ENCODE measurements at regions of chr4 and their contacts with region 1.

Region 1: GRCh38 chr4:61866378-61867030 is 666.4 kb downstream of the ADGRL3 start:
- DNase-seq: no peak
- ATAC-seq: no peak
- H3K4me3 ChIP-seq: no peak overlapping the region
- H3K27ac ChIP-seq: no peak overlapping the region
- H3K4me1 ChIP-seq: no peaks in the 10 kb centered on the region
- H3K27me3 ChIP-seq: no peaks in the 10 kb centered on the region
- CTCF ChIP-seq: no peak
- EP300 ChIP-seq: no peak
- POLR2A ChIP-seq: no peak
- RAD21 ChIP-seq: no peak

Region 2: GRCh38 chr4:60847614-60848013 is 1018.9 kb before region 1 on chr4:
- CTCF ChIA-PET with region 1: no interaction called
- POLR2A ChIA-PET with region 1: no interaction called
- RAD21 ChIA-PET with region 1: no interaction called
- SMC1A ChIA-PET with region 1: no interaction called
- in situ Hi-C with region 1: no loop called
- intact Hi-C with region 1: no loop called
- DNase-seq: no peak
- ATAC-seq: no peak
- H3K4me3 ChIP-seq: no peak overlapping the region
- H3K27ac ChIP-seq: no peak overlapping the region
- H3K4me1 ChIP-seq: no peaks in the 10 kb centered on the region
- H3K27me3 ChIP-seq: no peaks in the 10 kb centered on the region
- CTCF ChIP-seq: no peak
- EP300 ChIP-seq: no peak
- POLR2A ChIP-seq: no peak
- RAD21 ChIP-seq: no peak

Region 3: GRCh38 chr4:61853041-61853440 is 13.5 kb before region 1 on chr4:
- CTCF ChIA-PET with region 1: interaction called, 7 read pairs
- POLR2A ChIA-PET with region 1: no interaction called
- RAD21 ChIA-PET with region 1: interaction called, 8 read pairs
- SMC1A ChIA-PET with region 1: interaction called, 29 read pairs
- in situ Hi-C with region 1: no loop called
- intact Hi-C with region 1: no loop called
- DNase-seq: no peak
- ATAC-seq: no peak
- H3K4me3 ChIP-seq: no peak overlapping the region
- H3K27ac ChIP-seq: no peak overlapping the region
- H3K4me1 ChIP-seq: no peaks in the 10 kb centered on the region
- H3K27me3 ChIP-seq: no peaks in the 10 kb centered on the region
- CTCF ChIP-seq: no peak
- EP300 ChIP-seq: no peak
- POLR2A ChIP-seq: no peak
- RAD21 ChIP-seq: no peak

Region 4: GRCh38 chr4:61877893-61878292 is 11.4 kb after region 1 on chr4:
- CTCF ChIA-PET with region 1: interaction called, 8 read pairs
- POLR2A ChIA-PET with region 1: interaction called, 7 read pairs
- RAD21 ChIA-PET with region 1: interaction called, 5 read pairs
- SMC1A ChIA-PET with region 1: interaction called, 14 read pairs
- in situ Hi-C with region 1: no loop called
- intact Hi-C with region 1: no loop called
- DNase-seq: no peak
- ATAC-seq: no peak
- H3K4me3 ChIP-seq: no peak overlapping the region
- H3K27ac ChIP-seq: no peak overlapping the region
- H3K4me1 ChIP-seq: no peaks in the 10 kb centered on the region
- H3K27me3 ChIP-seq: no peaks in the 10 kb centered on the region
- CTCF ChIP-seq: no peak
- EP300 ChIP-seq: no peak
- POLR2A ChIP-seq: no peak
- RAD21 ChIP-seq: no peak

Region 5: DNA sequence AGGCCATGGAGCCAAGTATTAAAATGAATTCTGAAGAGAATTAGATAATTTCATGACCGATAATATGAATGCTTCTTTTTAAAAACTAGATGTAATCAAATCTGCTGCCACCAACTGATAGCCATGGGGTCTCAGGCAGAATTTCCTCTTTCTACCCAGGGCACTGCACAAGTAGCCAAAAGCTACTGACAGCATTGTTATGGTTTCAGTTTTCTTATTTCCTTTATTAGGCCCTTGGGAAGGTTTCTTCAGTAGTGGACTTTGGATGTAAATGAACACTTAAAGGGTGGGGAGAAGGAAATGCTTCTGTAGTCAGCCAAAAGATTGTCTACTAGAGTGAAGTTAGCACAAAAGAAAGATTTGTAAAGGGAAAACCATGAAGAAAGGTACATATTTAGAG is 19.6 kb after region 1 on chr4:
- CTCF ChIA-PET with region 1: interaction called, 7 read pairs
- POLR2A ChIA-PET with region 1: no interaction called
- RAD21 ChIA-PET with region 1: interaction called, 4 read pairs
- SMC1A ChIA-PET with region 1: interaction called, 12 read pairs
- in situ Hi-C with region 1: no loop called
- intact Hi-C with region 1: no loop called
- DNase-seq: no peak
- ATAC-seq: no peak
- H3K4me3 ChIP-seq: no peak overlapping the region
- H3K27ac ChIP-seq: no peak overlapping the region
- H3K4me1 ChIP-seq: no peaks in the 10 kb centered on the region
- H3K27me3 ChIP-seq: no peaks in the 10 kb centered on the region
- CTCF ChIP-seq: no peak
- EP300 ChIP-seq: no peak
- POLR2A ChIP-seq: no peak
- RAD21 ChIP-seq: no peak

Region 6: DNA sequence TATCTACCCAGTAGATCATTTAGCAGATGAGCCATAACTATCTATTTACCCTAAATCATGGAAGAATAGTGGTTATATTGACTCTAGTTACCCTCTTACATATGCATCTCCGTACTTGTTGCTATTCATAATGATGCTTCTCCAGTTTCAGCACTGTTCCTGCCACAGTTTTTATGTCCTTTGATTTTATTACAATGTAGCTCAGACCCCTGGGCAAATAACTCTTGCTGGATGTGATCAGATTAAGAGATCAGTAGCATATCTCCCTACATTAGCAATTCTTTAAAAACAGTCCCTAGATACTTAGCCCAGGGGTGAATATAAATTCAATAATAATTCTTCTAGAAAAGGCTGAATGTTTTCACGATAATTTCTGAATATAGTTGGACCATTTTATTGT is 30.1 kb after region 1 on chr4:
- CTCF ChIA-PET with region 1: interaction called, 7 read pairs
- POLR2A ChIA-PET with region 1: interaction called, 6 read pairs
- RAD21 ChIA-PET with region 1: interaction called, 5 read pairs
- SMC1A ChIA-PET with region 1: interaction called, 13 read pairs
- in situ Hi-C with region 1: no loop called
- intact Hi-C with region 1: no loop called
- DNase-seq: no peak
- ATAC-seq: no peak
- H3K4me3 ChIP-seq: no peak overlapping the region
- H3K27ac ChIP-seq: no peak overlapping the region
- H3K4me1 ChIP-seq: no peaks in the 10 kb centered on the region
- H3K27me3 ChIP-seq: no peaks in the 10 kb centered on the region
- CTCF ChIP-seq: no peak
- EP300 ChIP-seq: no peak
- POLR2A ChIP-seq: no peak
- RAD21 ChIP-seq: no peak

Region 7: GRCh38 chr4:61918507-61919473 is 52.3 kb after region 1 on chr4:
- CTCF ChIA-PET with region 1: interaction called, 5 read pairs
- POLR2A ChIA-PET with region 1: no interaction called
- RAD21 ChIA-PET with region 1: interaction called, 5 read pairs
- SMC1A ChIA-PET with region 1: interaction called, 11 read pairs
- in situ Hi-C with region 1: no loop called
- intact Hi-C with region 1: no loop called
- DNase-seq: no peak
- ATAC-seq: peak; percentile 60
- H3K4me3 ChIP-seq: no peak overlapping the region
- H3K27ac ChIP-seq: no peak overlapping the region
- H3K4me1 ChIP-seq: no peaks in the 10 kb centered on the region
- H3K27me3 ChIP-seq: no peaks in the 10 kb centered on the region
- CTCF ChIP-seq: no peak
- EP300 ChIP-seq: no peak
- POLR2A ChIP-seq: no peak
- RAD21 ChIP-seq: no peak

Measured in GM12878 (cell line).